BJ (cell line): ENCODE measurements at regions of chr18 and their contacts with region 1.

Region 1: DNA sequence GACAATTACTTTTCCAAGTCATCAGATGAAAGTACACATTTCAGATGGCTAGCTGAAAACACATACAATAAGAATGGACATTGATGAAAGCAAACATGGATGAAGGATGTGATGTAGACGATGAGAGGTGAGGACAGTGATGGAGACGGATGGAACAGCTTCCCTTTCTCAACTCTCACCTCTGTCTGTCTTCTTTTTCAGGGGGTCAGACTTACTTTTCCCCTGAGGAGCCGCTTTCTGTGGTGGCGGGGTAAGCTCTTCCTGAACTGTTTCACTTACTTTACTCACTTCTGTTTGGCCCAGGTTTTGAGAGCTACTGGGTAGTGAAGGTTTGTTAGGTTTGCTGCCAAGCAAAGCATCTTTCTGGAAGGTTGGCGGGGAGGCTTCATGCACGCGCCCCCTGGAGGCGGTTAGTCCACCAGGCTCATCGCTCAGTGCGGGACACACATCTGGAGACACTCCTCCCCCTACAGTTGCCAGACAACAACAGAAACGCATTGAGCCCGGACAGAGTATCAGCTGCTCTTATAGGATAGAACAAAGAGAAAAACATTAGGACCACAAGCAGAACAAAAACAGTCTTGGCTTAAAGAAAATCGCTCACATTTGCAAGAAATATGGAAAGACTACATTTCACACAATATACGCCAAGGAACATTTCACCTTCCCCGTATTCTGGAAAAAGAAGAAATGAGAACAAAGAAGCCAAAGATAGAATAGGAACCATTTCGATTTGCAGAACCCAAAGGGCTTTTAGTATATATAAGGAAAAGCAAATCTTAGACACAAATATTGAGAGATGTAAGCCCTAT is 90.5 kb downstream of the MYOM1 start:
- DNase-seq: peak; percentile 24
- H3K4me3 ChIP-seq: no peak overlapping the region
- H3K27me3 ChIP-seq: no peaks in the 10 kb centered on the region
- CTCF ChIP-seq: peak; percentile 97

Region 2: GRCh38 chr18:2948038-2948437 is 181.2 kb before region 1 on chr18:
- CTCF ChIA-PET with region 1: interaction called, 13 read pairs
- POLR2A ChIA-PET with region 1: no interaction called
- DNase-seq: no peak
- H3K4me3 ChIP-seq: no peak overlapping the region
- H3K27me3 ChIP-seq: no peaks in the 10 kb centered on the region
- CTCF ChIP-seq: peak; percentile 47

Region 3: DNA sequence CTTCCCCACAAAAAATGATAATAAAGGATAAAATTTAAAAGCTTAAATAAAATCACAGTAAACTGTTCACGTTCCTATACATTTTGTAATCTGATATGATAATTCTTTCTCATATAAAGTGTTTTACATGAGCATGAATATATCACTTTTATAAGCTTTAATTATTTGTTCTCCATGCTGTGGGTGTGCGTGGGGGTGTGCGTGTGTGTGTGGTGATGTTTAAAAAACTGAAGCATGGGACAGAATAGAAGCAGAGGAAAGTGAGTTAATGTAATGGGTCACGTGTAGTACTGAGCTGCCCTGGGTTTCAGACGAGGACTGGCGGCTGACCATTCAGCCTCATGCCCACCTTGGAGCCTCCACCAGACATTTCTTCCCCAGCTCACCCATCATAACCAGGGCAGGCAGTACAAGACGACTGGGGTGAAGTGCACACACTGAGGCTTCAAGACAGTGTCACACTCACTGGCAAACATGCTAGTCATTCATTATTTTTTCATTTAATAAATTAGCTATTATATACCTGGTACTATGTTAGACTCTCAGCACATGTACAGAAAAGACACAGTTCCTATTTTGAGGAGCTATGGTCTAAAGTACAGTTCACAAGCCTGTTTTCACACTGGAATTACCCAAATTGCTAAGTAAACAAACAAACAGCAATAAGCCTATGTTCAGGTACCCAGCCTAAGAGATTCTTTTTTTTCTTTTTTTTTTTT is 19.1 kb before region 1 on chr18:
- CTCF ChIA-PET with region 1: interaction called, 11 read pairs
- POLR2A ChIA-PET with region 1: no interaction called
- DNase-seq: no peak
- H3K4me3 ChIP-seq: no peak overlapping the region
- H3K27me3 ChIP-seq: no peaks in the 10 kb centered on the region
- CTCF ChIP-seq: no peak

Region 4: GRCh38 chr18:3117493-3118192 is 11.6 kb before region 1 on chr18:
- CTCF ChIA-PET with region 1: interaction called, 29 read pairs
- POLR2A ChIA-PET with region 1: no interaction called
- DNase-seq: no peak
- H3K4me3 ChIP-seq: no peak overlapping the region
- H3K27me3 ChIP-seq: no peaks in the 10 kb centered on the region
- CTCF ChIP-seq: no peak

Region 5: GRCh38 chr18:3140986-3141639 is 11.9 kb after region 1 on chr18:
- CTCF ChIA-PET with region 1: interaction called, 14 read pairs
- POLR2A ChIA-PET with region 1: interaction called, 3 read pairs
- DNase-seq: no peak
- H3K4me3 ChIP-seq: no peak overlapping the region
- H3K27me3 ChIP-seq: no peaks in the 10 kb centered on the region
- CTCF ChIP-seq: no peak

Region 6: DNA sequence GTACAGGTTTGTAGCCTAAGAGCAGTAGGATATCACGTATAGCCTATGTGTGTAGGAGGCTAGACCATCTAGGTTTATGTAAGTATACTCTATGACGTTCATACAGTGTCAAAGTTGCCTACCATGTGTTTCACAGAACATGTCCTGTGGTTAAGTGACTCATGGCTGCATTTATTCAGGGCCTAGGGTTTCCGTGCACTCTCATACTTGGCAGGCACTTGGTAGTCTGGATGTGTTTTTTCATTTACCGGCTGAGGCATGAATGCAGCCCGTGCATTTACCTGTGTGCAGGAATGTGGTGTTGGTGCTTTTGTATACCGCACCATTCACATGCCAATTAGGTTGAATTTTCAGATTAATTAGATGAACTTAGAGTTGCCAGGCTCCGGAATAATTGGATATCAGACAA is 176.1 kb after region 1 on chr18:
- CTCF ChIA-PET with region 1: no interaction called
- POLR2A ChIA-PET with region 1: no interaction called
- DNase-seq: peak; percentile 86
- H3K4me3 ChIP-seq: no peak overlapping the region
- H3K27me3 ChIP-seq: no peaks in the 10 kb centered on the region
- CTCF ChIP-seq: no peak

Region 7: GRCh38 chr18:3321133-3321812 is 192.0 kb after region 1 on chr18:
- CTCF ChIA-PET with region 1: no interaction called
- POLR2A ChIA-PET with region 1: no interaction called
- DNase-seq: no peak
- H3K4me3 ChIP-seq: no peak overlapping the region
- H3K27me3 ChIP-seq: no peaks in the 10 kb centered on the region
- CTCF ChIP-seq: no peak